Mammary epithelial cell (primary cell): ENCODE measurements at regions of chr1 and their contacts with region 1.

Region 1: GRCh38 chr1:78004719-78005447 is at the start of gene DNAJB4:
- DNase-seq: peak; percentile 96
- H3K4me3 ChIP-seq: peak within 1 kb of the TSS; percentile 57 to 89 (median 70)
- H3K27ac ChIP-seq: peak within 1 kb of the TSS; percentile 100
- H3K4me1 ChIP-seq: peaks cover 14% of the 10 kb centered on the region
- H3K27me3 ChIP-seq: no peaks in the 10 kb centered on the region
- CTCF ChIP-seq: no peak
- total RNA-seq, gene DNAJB4: 15.6 to 25.3 TPM

Region 2: DNA sequence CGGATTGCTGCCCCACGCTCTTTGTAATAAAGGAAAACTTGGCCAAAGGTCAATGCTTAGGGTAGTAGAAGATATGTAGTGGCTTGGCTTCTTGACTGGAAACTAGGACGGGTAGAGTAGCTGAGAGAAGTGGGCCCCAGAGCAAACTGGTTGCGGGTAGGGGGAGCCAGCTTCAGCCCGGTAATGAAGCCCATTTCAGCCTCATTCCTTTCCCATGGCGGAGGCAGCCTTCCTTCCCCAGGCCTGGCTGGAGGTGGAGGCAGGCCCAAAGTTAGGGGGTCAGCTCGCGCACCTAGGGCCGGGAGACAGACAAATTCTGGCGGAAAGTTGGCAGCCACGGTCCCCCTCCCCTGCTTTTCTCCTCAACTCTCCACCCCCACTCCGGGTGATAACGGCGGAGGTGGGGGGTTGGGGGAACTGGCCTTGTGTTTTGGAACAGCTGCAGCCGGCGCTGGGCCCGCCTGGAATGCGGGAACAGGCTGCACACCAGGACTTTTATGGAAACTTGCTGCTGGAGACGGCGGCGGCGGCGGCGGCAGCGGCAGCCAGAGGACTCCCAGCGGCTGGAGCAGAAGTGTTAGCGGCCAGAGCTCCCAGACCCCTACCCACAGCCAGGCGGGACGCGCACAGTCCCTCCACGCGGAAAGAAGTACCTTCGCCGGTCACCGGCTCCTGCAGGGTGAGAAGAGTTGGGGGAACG is 116.7 kb before region 1 on chr1 and contains the start of gene NEXN:
- CTCF ChIA-PET with region 1: no interaction called
- dilution Hi-C with region 1: no loop called
- in situ Hi-C with region 1: no loop called
- intact Hi-C with region 1: no loop called
- DNase-seq: peak; percentile 52
- H3K4me3 ChIP-seq: peak within 1 kb of the TSS; percentile 81 to 88 (median 84)
- H3K27ac ChIP-seq: peak within 1 kb of the TSS; percentile 86
- H3K4me1 ChIP-seq: peaks cover 9% of the 10 kb centered on the region
- H3K27me3 ChIP-seq: no peaks in the 10 kb centered on the region
- CTCF ChIP-seq: peak in 1 of 2 donors; percentile 2
- total RNA-seq, gene NEXN: 6.3 to 8.2 TPM

Region 3: GRCh38 chr1:77978969-77979876 is 25.7 kb before region 1 on chr1 and contains the start of gene FUBP1:
- CTCF ChIA-PET with region 1: interaction called, 4 read pairs
- dilution Hi-C with region 1: no loop called
- in situ Hi-C with region 1: no loop called
- intact Hi-C with region 1: loop called (anchors 1 kb)
- DNase-seq: peak; percentile 98
- H3K4me3 ChIP-seq: peak within 1 kb of the TSS; percentile 57 to 93 (median 75)
- H3K27ac ChIP-seq: peak within 1 kb of the TSS; percentile 99
- H3K4me1 ChIP-seq: peaks cover 31% of the 10 kb centered on the region
- H3K27me3 ChIP-seq: no peaks in the 10 kb centered on the region
- CTCF ChIP-seq: peak; percentile 47 to 75
- total RNA-seq, gene FUBP1: 85.9 to 113 TPM

Region 4: GRCh38 chr1:78070758-78071157 is 65.9 kb after region 1 on chr1:
- CTCF ChIA-PET with region 1: no interaction called
- dilution Hi-C with region 1: no loop called
- in situ Hi-C with region 1: no loop called
- intact Hi-C with region 1: loop called (anchors 2 kb)
- DNase-seq: peak; percentile 90
- H3K4me3 ChIP-seq: no peak overlapping the region
- H3K27ac ChIP-seq: peak overlapping the region; percentile 62
- H3K4me1 ChIP-seq: peaks cover 21% of the 10 kb centered on the region
- H3K27me3 ChIP-seq: no peaks in the 10 kb centered on the region
- CTCF ChIP-seq: no peak

Region 5: GRCh38 chr1:78092686-78093085 is 87.8 kb after region 1 on chr1:
- CTCF ChIA-PET with region 1: no interaction called
- dilution Hi-C with region 1: no loop called
- in situ Hi-C with region 1: no loop called
- intact Hi-C with region 1: loop called (anchors 1 kb)
- DNase-seq: peak; percentile 83
- H3K4me3 ChIP-seq: no peak overlapping the region
- H3K27ac ChIP-seq: no peak overlapping the region
- H3K4me1 ChIP-seq: peaks cover 43% of the 10 kb centered on the region
- H3K27me3 ChIP-seq: no peaks in the 10 kb centered on the region
- CTCF ChIP-seq: no peak

Region 6: GRCh38 chr1:78627321-78627720 is 622.4 kb after region 1 on chr1:
- CTCF ChIA-PET with region 1: no interaction called
- dilution Hi-C with region 1: no loop called
- in situ Hi-C with region 1: no loop called
- intact Hi-C with region 1: no loop called
- DNase-seq: peak; percentile 42
- H3K4me3 ChIP-seq: no peak overlapping the region
- H3K27ac ChIP-seq: no peak overlapping the region
- H3K4me1 ChIP-seq: no peaks in the 10 kb centered on the region
- H3K27me3 ChIP-seq: no peaks in the 10 kb centered on the region
- CTCF ChIP-seq: no peak